Activated CD4-positive, alpha-beta T cell treated with anti-CD3 and anti-CD28 coated beads for 36 hours (primary cell): ENCODE measurements at regions of chr19 and their contacts with region 1.

Region 1: GRCh38 chr19:1478934-1479707 is at the start of gene C19orf25:
- DNase-seq: peak; percentile 97
- ATAC-seq: peak; percentile 98
- H3K4me3 Mint-ChIP-seq: peak within 1 kb of the TSS; percentile 96
- H3K27ac Mint-ChIP-seq: peak within 1 kb of the TSS; percentile 95
- H3K4me1 Mint-ChIP-seq: peaks cover 6% of the 10 kb centered on the region
- H3K27me3 Mint-ChIP-seq: no peaks in the 10 kb centered on the region
- total RNA-seq, gene C19orf25: 19.9 to 26.9 TPM

Region 2: GRCh38 chr19:1438035-1438932 is 40.8 kb before region 1 on chr19 and contains the start of gene RPS15:
- CTCF ChIA-PET with region 1: no interaction called
- POLR2A ChIA-PET with region 1: no interaction called
- intact Hi-C with region 1: loop called (anchors 1 to 5 kb)
- DNase-seq: peak; percentile 98
- ATAC-seq: peak; percentile 86
- H3K4me3 Mint-ChIP-seq: peak within 1 kb of the TSS; percentile 94
- H3K27ac Mint-ChIP-seq: peak within 1 kb of the TSS; percentile 99
- H3K4me1 Mint-ChIP-seq: peaks cover 34% of the 10 kb centered on the region
- H3K27me3 Mint-ChIP-seq: no peaks in the 10 kb centered on the region
- total RNA-seq, gene RPS15: 1,716 to 1,858 TPM

Region 3: DNA sequence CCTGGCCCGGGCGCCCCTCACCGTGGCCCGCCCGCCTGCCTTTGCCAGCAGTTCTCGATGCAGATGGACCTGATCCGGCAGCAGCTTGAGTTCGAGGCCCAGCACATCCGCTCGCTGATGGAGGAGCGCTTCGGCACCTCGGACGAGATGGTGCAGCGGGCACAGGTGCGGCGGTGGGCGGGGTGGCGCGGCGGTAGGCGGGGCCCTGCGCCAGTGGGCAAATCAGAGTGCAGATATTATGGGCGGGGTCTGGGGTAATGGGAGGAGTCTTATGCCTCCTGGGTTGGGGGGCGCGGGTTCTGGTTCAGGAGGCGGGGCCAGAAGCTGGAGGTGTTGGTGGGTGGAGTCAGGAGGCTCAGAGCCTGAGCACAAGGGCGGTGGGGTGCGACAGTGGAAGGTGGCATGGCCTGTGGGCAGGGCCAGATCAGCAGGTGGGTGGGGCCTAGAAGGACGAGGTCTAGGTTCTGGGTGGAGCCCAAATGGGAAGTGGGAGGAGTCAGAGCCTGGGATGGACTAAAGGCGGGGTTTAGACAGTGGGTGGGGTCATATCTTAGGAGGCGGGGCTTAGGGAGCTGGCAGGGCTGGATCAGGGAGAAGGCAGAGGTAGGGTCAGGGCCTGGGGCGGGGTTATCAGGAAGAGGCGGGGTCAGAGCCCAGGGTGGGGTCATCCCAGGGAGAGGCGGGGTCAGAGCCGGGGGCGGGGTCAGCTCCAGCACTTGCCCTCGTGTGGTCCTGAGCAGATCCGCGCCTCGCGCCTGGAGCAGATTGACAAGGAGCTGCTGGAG is 23.6 kb before region 1 on chr19:
- CTCF ChIA-PET with region 1: no interaction called
- POLR2A ChIA-PET with region 1: no interaction called
- intact Hi-C with region 1: loop called in 1 of 2 experiments (anchors 1 kb)
- DNase-seq: peak; percentile 85
- ATAC-seq: peak; percentile 82
- H3K4me3 Mint-ChIP-seq: peak overlapping the region; percentile 14
- H3K27ac Mint-ChIP-seq: no peak overlapping the region
- H3K4me1 Mint-ChIP-seq: peaks cover 15% of the 10 kb centered on the region
- H3K27me3 Mint-ChIP-seq: peaks cover 41% of the 10 kb centered on the region

Region 4: DNA sequence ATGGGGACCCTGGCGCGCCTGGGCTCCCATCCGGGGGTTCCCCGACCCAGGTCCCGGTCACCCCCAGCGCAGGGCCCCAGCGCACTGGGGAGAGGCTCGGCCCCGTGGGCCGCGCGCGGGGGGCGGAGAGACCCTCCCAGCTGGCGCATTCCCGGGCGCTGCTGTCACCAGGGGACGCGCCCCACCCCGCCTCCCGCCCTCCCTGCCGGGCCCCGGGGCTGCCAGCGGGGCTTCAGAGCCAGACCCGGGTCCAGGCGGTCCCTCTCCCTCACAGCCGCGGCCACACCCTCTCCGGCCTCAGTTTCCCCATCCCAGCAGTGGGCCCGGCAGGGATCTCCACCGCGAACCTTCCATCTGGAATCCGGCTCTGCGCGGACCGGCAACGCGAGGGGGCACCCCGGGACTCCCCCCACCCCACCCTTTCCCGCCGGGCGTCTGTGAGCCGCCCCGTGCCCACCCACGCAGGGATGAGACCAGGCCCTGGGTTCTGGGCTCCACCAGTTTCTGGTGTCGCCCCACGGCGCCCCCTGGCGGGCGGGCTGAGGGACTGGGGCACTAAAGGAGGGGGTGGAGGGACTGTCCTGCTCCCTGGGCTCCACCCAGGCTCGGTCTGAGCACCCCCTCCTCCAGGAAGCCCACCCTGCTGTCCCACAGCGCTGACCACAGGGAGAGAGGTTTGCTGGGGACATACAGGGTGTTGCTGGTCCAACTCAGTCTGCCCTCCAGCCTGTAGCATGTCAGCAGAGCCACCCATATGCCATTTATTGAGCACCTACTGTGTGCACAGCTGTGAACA is 34.6 kb after region 1 on chr19:
- CTCF ChIA-PET with region 1: no interaction called
- POLR2A ChIA-PET with region 1: no interaction called
- intact Hi-C with region 1: loop called in 1 of 2 experiments (anchors 1 kb)
- DNase-seq: peak; percentile 88
- ATAC-seq: peak; percentile 60
- H3K4me3 Mint-ChIP-seq: no peak overlapping the region
- H3K27ac Mint-ChIP-seq: no peak overlapping the region
- H3K4me1 Mint-ChIP-seq: peaks cover 7% of the 10 kb centered on the region
- H3K27me3 Mint-ChIP-seq: no peaks in the 10 kb centered on the region

Region 5: GRCh38 chr19:1592755-1593500 is 113.8 kb after region 1 on chr19 and contains the start of gene MBD3:
- CTCF ChIA-PET with region 1: no interaction called
- POLR2A ChIA-PET with region 1: no interaction called
- intact Hi-C with region 1: loop called in 1 of 2 experiments (anchors 2 kb)
- DNase-seq: peak; percentile 93
- ATAC-seq: peak; percentile 85
- H3K4me3 Mint-ChIP-seq: peak within 1 kb of the TSS; percentile 94
- H3K27ac Mint-ChIP-seq: peak within 1 kb of the TSS; percentile 93
- H3K4me1 Mint-ChIP-seq: peaks cover 20% of the 10 kb centered on the region
- H3K27me3 Mint-ChIP-seq: no peaks in the 10 kb centered on the region
- total RNA-seq, gene MBD3: 68.9 to 87.5 TPM